ENCODE measurements at regions of chr1 and their contacts with region 1.

Region 1: GRCh38 chr1:227946624-227947385 is 927 bp downstream of the WNT9A start:
- DNase-seq: peak; percentile 92
- H3K4me3 ChIP-seq: peak overlapping the region; percentile 35 to 75 (median 72)
- H3K27ac ChIP-seq: peak overlapping the region; percentile 84 to 97 (median 93)
- H3K4me1 ChIP-seq: peaks cover 7 to 67% (median 65%) of the 10 kb centered on the region in 4 donors
- H3K27me3 ChIP-seq: no peaks in the 10 kb centered on the region
- CTCF ChIP-seq: peak; percentile 39 to 80 (median 54)
- EP300 ChIP-seq: no peak
- POLR2A ChIP-seq: no peak

Region 2: GRCh38 chr1:227486559-227486958 is 460.2 kb before region 1 on chr1:
- intact Hi-C with region 1: loop called (anchors 2 kb)
- DNase-seq: no peak
- H3K4me3 ChIP-seq: no peak overlapping the region
- H3K27ac ChIP-seq: no peak overlapping the region
- H3K4me1 ChIP-seq: no peaks in the 10 kb centered on the region
- H3K27me3 ChIP-seq: no peaks in the 10 kb centered on the region
- CTCF ChIP-seq: no peak
- EP300 ChIP-seq: no peak
- POLR2A ChIP-seq: no peak

Region 3: DNA sequence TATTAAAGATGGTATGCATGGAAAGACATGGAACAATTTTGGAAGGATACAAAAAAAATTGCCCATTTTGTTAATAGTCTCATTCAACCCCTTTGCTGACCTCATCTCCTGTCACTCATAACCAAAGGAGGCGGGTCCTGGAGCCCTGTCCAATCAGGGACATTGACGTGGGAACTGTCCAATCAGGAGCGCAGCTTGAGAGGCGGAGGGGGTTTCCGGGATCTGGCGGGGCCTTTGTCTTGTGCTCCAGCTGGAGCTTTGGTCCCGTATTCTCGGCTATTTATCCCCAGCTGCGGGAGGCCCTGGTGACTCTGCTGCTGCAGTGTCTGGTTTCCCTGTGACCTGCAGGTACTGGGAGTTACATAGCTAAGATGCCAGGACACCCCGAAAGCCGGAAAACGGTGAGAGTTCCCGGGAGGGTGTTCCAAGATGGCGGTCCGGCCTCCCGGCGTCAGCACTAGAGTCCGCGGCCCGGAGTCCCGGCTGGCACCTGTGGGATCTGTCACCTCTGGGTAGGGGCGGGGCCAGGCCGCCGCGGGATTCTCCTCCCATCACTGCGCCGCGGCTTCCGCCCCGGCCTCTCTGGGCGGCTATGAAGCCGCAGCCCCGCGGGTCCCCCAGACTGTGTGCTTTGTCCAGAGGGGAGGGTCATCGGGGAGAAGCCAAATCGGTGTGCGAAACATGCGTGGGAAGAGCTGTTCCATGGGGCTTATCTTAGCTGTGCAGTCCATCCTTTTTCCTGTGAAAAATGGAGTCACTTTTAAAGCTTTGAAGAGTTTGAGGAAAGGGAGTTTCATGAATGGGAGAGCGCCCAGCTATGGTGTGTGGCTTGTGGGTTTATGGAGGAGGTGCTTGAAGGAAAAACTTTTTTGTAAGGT is 383.2 kb before region 1 on chr1 and contains the start of gene ZNF678:
- intact Hi-C with region 1: loop called (anchors 5 kb)
- DNase-seq: peak; percentile 96
- H3K4me3 ChIP-seq: peak within 1 kb of the TSS; percentile 51 to 78 (median 65)
- H3K27ac ChIP-seq: peak within 1 kb of the TSS; percentile 82 to 90 (median 86)
- H3K4me1 ChIP-seq: peaks cover 0 to 9% (median 6%) of the 10 kb centered on the region in 4 donors
- H3K27me3 ChIP-seq: peaks cover 6 to 32% (median 20%) of the 10 kb centered on the region in 3 donors
- CTCF ChIP-seq: no peak
- EP300 ChIP-seq: no peak
- POLR2A ChIP-seq: peak; percentile 21 to 53
- total RNA-seq, gene ZNF678: 5.3 to 15.3 (median 8.4) TPM

Region 4: GRCh38 chr1:227787513-227788270 is 159.1 kb before region 1 on chr1:
- intact Hi-C with region 1: loop called (anchors 1 kb)
- DNase-seq: peak; percentile 97
- H3K4me3 ChIP-seq: peak overlapping the region; percentile 50 to 61 (median 54)
- H3K27ac ChIP-seq: peak overlapping the region; percentile 71 to 84 (median 80)
- H3K4me1 ChIP-seq: peaks cover 0 to 29% (median 19%) of the 10 kb centered on the region in 4 donors
- H3K27me3 ChIP-seq: no peaks in the 10 kb centered on the region
- CTCF ChIP-seq: no peak
- EP300 ChIP-seq: no peak
- POLR2A ChIP-seq: peak; percentile 28 to 51

Region 5: GRCh38 chr1:227901906-227902645 is 44.7 kb before region 1 on chr1:
- intact Hi-C with region 1: no loop called
- DNase-seq: peak; percentile 64
- H3K4me3 ChIP-seq: no peak overlapping the region
- H3K27ac ChIP-seq: no peak overlapping the region
- H3K4me1 ChIP-seq: no peaks in the 10 kb centered on the region
- H3K27me3 ChIP-seq: no peaks in the 10 kb centered on the region
- CTCF ChIP-seq: no peak
- EP300 ChIP-seq: no peak
- POLR2A ChIP-seq: no peak

Measured in sigmoid colon (tissue), 7 donors.